ENCODE measurements at regions of chr12 and their contacts with region 1.

Region 1: GRCh38 chr12:121060149-121061001 is 21.3 kb upstream of the OASL start:
- DNase-seq: peak; percentile 65
- H3K4me3 Mint-ChIP-seq: peak overlapping the region; percentile 74
- H3K27ac Mint-ChIP-seq: peak overlapping the region; percentile 93
- H3K4me1 Mint-ChIP-seq: peaks cover 30% of the 10 kb centered on the region
- H3K27me3 Mint-ChIP-seq: peaks cover 2% of the 10 kb centered on the region

Region 2: DNA sequence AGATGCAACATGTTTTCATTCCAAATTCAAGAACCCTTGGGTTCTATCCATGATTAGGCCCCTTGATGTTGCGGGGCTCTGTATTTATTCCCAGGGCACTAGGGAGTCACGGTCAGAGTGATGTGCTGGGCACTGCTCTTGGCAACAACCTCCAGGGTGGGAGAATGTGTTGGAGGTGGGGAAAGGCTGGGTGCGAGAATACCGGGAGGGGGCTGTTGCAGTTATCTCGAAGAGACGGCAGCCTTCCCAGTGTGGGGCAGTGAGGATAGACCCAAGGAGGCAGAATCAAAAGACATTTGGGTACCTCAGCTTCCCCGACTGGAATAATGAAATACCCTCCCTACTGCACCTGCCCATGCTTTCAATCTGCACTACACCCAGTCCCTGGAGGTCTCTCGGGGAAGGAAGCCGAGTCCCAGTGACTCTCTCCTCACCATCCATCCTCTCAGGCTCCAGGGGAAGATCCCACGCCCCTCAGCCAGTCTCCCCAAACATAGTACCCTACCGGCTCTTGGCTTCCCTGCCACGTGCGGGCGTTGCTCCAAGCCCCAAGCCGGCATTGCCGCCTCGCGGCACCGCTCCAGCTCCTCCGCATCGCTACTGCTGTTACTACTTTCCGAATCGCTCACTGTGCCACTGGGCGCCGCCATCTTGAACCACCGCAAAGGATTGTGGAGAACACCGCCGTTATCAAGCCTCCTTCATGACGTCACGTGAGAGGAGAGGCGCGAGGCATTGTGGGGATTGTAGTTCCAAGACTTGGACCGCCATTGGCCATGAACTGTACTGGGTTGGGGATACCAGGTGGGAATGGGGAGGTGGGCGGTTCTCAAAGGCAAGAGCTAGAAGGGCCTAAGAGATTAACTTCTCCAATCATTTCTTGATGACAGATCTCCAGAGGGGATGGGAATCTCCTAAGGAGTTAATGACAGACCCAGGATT is 44.3 kb before region 1 on chr12 and contains the start of gene C12orf43:
- intact Hi-C with region 1: loop called (anchors 1 kb)
- DNase-seq: peak; percentile 90
- H3K4me3 Mint-ChIP-seq: peak within 1 kb of the TSS; percentile 100
- H3K27ac Mint-ChIP-seq: peak within 1 kb of the TSS; percentile 99
- H3K4me1 Mint-ChIP-seq: peaks cover 28% of the 10 kb centered on the region
- H3K27me3 Mint-ChIP-seq: no peaks in the 10 kb centered on the region
- total RNA-seq, gene C12orf43: 34.6 and 35.3 TPM in 2 replicates

Region 3: DNA sequence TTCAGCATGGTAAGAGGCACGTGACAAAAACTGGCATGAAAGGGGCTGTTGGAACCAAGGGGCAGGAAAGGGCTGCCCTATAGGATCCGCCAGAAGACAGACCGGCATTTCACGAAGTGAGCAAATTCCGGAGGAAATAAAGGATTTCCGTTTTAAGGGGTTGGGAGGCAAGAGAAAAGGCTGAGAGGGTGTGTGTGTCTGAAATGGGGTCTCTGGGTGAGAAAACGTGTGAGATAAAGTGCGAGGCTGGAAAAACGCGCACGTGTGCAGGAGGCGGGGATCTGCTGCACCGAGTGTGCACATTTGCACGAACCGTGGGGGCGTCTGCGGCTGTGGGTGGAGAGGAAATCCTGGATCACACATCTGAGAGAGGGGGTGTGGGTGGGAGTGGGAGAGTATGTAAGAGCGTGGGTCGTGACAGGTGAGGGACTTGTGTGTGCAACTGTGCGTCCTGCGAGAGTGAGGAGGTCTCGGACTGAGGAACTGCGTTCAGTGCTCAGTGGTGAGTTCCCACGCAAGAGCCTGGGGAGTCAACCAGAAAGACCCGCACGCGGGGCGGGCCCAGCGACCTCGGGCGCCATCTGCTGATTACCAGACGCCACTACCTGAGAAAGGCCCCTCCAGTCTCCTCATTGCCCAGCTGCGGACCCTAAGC is 35.3 kb after region 1 on chr12:
- intact Hi-C with region 1: loop called (anchors 1 kb)
- DNase-seq: peak; percentile 74
- H3K4me3 Mint-ChIP-seq: peak overlapping the region; percentile 82
- H3K27ac Mint-ChIP-seq: peak overlapping the region; percentile 61
- H3K4me1 Mint-ChIP-seq: peaks cover 33% of the 10 kb centered on the region
- H3K27me3 Mint-ChIP-seq: peaks cover 4% of the 10 kb centered on the region

Region 4: DNA sequence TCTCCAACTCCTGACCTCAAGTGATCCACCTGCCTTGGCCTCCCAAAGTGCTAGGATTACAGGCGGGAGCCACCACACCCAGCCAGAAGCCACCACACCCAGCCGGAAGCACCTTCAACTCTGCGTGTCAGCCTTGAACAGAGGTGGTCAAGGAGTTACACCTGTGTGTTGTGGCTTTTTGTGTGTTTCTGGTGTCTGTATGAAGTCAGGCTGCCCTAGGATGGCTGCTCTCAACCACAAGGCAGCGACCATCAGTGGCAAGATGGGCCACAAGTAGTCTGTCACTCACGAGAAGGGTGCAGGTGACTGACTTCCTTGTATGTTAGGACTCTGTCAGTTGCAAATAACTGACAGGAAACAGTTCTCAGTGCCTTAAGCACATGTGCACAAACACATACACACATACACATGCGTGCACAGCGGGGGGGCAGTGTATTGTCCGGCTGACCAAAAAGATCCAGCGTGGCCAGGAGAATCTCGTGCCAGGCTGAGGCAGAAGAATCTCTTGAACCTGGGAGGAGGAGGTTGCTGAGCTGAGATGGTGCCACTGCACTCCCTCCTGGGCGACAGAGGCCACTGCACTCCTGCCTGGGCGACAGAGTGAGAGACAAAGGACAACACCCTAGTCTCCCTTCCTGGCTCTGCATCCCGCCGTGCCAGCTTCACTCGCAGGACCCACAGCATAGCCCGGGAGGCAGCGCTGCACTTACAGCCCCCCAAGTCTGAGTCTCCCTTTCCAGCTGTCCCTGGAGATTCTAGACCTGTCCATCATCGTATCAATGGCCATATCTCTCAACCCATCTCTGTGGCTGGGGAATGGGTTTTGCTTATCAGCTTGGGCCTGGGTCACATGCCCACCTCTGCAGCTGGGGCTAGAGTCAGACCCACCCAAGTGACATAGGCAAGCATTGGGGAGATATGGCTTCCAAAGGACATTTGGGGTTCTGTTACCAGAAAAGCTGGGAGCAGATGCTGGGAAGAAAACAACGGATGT is 163.2 kb after region 1 on chr12:
- intact Hi-C with region 1: loop called (anchors 1 kb)
- DNase-seq: peak; percentile 36
- H3K4me3 Mint-ChIP-seq: peak overlapping the region; percentile 37
- H3K27ac Mint-ChIP-seq: peak overlapping the region; percentile 89
- H3K4me1 Mint-ChIP-seq: peaks cover 44% of the 10 kb centered on the region
- H3K27me3 Mint-ChIP-seq: no peaks in the 10 kb centered on the region

Region 5: GRCh38 chr12:121351820-121352681 is 291.7 kb after region 1 on chr12 and contains the start of gene ANAPC5:
- intact Hi-C with region 1: loop called (anchors 1 kb)
- DNase-seq: peak; percentile 90
- H3K4me3 Mint-ChIP-seq: peak within 1 kb of the TSS; percentile 95
- H3K27ac Mint-ChIP-seq: peak within 1 kb of the TSS; percentile 98
- H3K4me1 Mint-ChIP-seq: peaks cover 33% of the 10 kb centered on the region
- H3K27me3 Mint-ChIP-seq: peaks cover 10% of the 10 kb centered on the region
- total RNA-seq, gene ANAPC5: 139 and 144 TPM in 2 replicates